MCF 10A (cell line): ENCODE measurements at regions of chr5 and their contacts with region 1.

Region 1: GRCh38 chr5:79235634-79236363 is at the start of gene JMY:
- DNase-seq: peak; percentile 83
- H3K4me3 Mint-ChIP-seq: peak within 1 kb of the TSS; percentile 95
- H3K27ac Mint-ChIP-seq: peak within 1 kb of the TSS; percentile 98
- H3K4me1 Mint-ChIP-seq: peaks cover 5% of the 10 kb centered on the region
- H3K27me3 Mint-ChIP-seq: no peaks in the 10 kb centered on the region
- CTCF ChIP-seq: no peak
- total RNA-seq, gene JMY: 16.8 and 19.3 TPM in 2 replicates

Region 2: GRCh38 chr5:78984439-78985115 is 251.2 kb before region 1 on chr5:
- CTCF ChIA-PET with region 1: no interaction called
- POLR2A ChIA-PET with region 1: interaction called, 17 read pairs
- intact Hi-C with region 1: no loop called
- DNase-seq: peak; percentile 85
- H3K4me3 Mint-ChIP-seq: peak overlapping the region; percentile 83
- H3K27ac Mint-ChIP-seq: peak overlapping the region; percentile 42
- H3K4me1 Mint-ChIP-seq: peaks cover 7% of the 10 kb centered on the region
- H3K27me3 Mint-ChIP-seq: no peaks in the 10 kb centered on the region
- CTCF ChIP-seq: peak; percentile 25

Region 3: DNA sequence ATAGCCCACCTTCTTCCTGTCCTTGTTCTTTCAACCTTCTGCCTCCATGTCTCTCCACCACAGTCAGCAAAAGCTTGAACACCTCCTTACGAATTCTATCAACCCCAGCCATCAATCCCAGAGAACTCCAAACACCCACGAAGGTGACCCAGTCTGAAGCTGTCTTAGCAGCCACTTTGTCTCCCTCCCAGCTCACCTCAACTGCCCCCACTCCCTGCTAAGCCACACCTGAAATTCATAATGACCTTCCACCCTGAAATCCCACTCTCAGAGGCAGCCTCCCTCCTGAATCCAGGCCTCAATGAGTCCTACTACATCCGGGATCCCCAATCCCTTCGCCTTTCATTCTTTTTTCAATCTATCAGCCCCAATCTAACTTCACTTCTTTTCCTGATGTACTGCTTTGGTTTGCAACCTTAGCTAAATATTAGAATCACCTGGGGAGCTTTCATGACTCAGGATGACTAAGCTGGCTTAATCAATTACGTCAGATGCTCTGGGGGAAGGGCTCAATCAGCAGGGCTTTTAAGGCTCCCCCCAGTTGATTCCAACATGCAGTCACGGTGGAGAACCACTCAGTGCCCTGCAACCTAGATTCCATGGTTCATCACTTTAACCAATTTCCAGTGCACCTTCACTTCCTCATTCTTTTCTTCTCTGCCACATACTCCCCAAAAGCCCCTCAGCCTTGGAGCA is 92.0 kb before region 1 on chr5:
- CTCF ChIA-PET with region 1: no interaction called
- POLR2A ChIA-PET with region 1: interaction called, 12 read pairs
- intact Hi-C with region 1: no loop called
- DNase-seq: peak; percentile 62
- H3K4me3 Mint-ChIP-seq: no peak overlapping the region
- H3K27ac Mint-ChIP-seq: peak overlapping the region; percentile 57
- H3K4me1 Mint-ChIP-seq: peaks cover 19% of the 10 kb centered on the region
- H3K27me3 Mint-ChIP-seq: no peaks in the 10 kb centered on the region
- CTCF ChIP-seq: no peak

Region 4: DNA sequence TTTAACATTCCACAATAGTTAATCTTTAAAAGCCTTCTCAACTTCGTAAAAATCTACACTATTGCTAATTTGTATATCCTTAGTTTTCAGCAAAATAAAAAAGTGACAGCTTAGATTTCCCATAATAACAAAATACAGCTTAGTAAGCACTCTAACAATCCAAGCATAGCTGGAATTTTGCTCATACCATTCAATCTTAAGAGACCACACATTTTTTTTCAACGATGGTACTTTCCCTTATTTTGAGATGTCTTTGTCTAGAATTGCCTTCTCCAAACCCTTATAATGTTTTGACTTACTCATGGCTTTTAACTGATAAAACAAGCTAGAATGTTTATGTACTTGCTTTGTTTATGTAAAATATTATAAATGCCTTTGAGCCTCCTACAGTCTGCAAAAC is 212.5 kb after region 1 on chr5:
- CTCF ChIA-PET with region 1: no interaction called
- POLR2A ChIA-PET with region 1: interaction called, 10 read pairs
- intact Hi-C with region 1: no loop called
- DNase-seq: no peak
- H3K4me3 Mint-ChIP-seq: no peak overlapping the region
- H3K27ac Mint-ChIP-seq: peak overlapping the region; percentile 23
- H3K4me1 Mint-ChIP-seq: no peaks in the 10 kb centered on the region
- H3K27me3 Mint-ChIP-seq: no peaks in the 10 kb centered on the region
- CTCF ChIP-seq: no peak

Region 5: DNA sequence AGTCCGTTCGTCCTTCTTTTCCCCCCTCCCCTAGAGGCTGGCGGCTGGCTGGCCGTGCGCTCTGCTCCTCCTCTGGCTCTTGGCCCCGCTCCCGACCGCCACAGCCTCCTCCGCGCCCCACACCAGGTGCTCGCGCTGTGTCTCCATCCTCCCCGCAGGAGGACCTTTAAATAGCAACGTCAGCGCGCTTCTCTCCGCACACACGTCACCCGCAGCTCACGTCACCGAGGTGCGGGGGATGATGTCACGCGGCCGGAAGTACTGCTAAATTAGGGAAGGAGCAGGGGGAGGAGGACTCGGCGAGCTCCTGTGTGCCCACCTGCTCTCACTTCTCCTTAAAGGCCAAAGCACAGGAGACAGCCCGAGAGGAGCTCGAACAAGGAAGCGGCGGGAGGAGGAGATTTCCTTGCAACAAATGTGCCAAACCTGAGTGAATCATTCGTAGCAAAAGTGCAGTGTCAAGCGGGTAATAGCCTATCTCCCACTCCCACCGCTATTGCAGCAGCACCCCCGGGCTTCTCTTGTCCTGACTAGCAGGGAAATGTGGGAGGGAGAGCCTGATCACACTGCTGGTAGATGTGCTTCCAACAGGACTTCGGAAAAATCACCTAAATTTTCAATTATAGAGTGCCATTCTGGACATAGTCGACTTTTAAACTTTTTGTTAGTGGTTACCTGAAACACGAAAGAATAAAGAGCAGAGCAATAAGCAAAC is 278.7 kb after region 1 on chr5:
- CTCF ChIA-PET with region 1: interaction called, 9 read pairs
- POLR2A ChIA-PET with region 1: interaction called, 76 read pairs
- intact Hi-C with region 1: loop called (anchors 2 kb)
- DNase-seq: peak; percentile 95
- H3K4me3 Mint-ChIP-seq: peak overlapping the region; percentile 94
- H3K27ac Mint-ChIP-seq: peak overlapping the region; percentile 97
- H3K4me1 Mint-ChIP-seq: peaks cover 26% of the 10 kb centered on the region
- H3K27me3 Mint-ChIP-seq: no peaks in the 10 kb centered on the region
- CTCF ChIP-seq: no peak

Region 6: DNA sequence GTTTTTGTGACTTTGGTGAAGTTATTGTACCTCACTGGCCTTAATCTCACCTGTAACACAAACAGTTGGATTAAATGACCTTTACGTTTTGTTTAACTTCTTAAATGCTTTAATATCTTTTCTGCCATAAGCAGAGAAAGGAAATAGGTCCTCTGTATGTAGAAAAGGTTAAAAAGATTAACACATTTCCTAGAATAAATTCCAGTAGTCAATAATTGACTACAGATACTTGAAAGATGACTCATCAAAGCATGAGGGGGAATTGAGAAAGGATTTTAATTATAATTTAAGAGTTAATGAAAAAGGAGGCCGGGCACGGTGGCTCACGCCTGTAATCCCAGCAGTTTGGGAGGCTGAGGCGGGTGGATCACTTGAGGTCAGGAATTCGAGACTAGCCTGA is 418.0 kb after region 1 on chr5:
- CTCF ChIA-PET with region 1: no interaction called
- POLR2A ChIA-PET with region 1: no interaction called
- intact Hi-C with region 1: no loop called
- DNase-seq: no peak
- H3K4me3 Mint-ChIP-seq: no peak overlapping the region
- H3K27ac Mint-ChIP-seq: no peak overlapping the region
- H3K4me1 Mint-ChIP-seq: no peaks in the 10 kb centered on the region
- H3K27me3 Mint-ChIP-seq: no peaks in the 10 kb centered on the region
- CTCF ChIP-seq: no peak